ENCODE measurements at regions of chr14 and their contacts with region 1.

Region 1: GRCh38 chr14:20343092-20343861 is at the start of gene PARP2:
- DNase-seq: peak; percentile 98 to 99
- ATAC-seq: peak; percentile 99
- H3K4me3 ChIP-seq: peak within 1 kb of the TSS; percentile 92 to 96
- H3K27ac ChIP-seq: peak within 1 kb of the TSS; percentile 80 to 94
- H3K4me1 ChIP-seq: no peaks in the 10 kb centered on the region
- H3K27me3 ChIP-seq: no peaks in the 10 kb centered on the region
- total RNA-seq, gene PARP2: 13.4 to 19.5 TPM

Region 2: GRCh38 chr14:19947413-19948090 is 395.7 kb before region 1 on chr14:
- intact Hi-C with region 1: no loop called
- DNase-seq: no peak
- ATAC-seq: no peak
- H3K4me3 ChIP-seq: no peak overlapping the region
- H3K27ac ChIP-seq: no peak overlapping the region
- H3K4me1 ChIP-seq: no peaks in the 10 kb centered on the region
- H3K27me3 ChIP-seq: no peaks in the 10 kb centered on the region

Region 3: DNA sequence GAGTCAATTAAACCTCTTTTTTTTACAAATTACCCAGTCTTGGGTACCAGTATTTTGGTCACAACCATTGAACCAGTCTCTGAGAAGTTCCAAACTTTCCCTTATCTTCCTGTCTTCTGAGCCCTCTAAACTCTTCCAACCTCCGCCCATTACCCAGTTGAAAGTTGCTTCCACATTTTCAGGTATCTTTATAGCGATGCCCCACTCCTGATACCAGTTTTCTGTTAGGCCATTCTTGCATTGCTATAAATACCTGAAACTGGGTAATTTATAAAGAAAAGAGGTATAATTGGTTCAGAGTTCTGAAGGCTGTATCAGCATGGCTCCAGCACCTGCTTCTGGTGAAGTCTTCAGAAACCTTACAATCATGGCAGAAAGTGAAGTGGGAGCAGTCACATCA is 69.2 kb before region 1 on chr14:
- intact Hi-C with region 1: no loop called
- DNase-seq: no peak
- ATAC-seq: no peak
- H3K4me3 ChIP-seq: no peak overlapping the region
- H3K27ac ChIP-seq: no peak overlapping the region
- H3K4me1 ChIP-seq: no peaks in the 10 kb centered on the region
- H3K27me3 ChIP-seq: no peaks in the 10 kb centered on the region

Region 4: DNA sequence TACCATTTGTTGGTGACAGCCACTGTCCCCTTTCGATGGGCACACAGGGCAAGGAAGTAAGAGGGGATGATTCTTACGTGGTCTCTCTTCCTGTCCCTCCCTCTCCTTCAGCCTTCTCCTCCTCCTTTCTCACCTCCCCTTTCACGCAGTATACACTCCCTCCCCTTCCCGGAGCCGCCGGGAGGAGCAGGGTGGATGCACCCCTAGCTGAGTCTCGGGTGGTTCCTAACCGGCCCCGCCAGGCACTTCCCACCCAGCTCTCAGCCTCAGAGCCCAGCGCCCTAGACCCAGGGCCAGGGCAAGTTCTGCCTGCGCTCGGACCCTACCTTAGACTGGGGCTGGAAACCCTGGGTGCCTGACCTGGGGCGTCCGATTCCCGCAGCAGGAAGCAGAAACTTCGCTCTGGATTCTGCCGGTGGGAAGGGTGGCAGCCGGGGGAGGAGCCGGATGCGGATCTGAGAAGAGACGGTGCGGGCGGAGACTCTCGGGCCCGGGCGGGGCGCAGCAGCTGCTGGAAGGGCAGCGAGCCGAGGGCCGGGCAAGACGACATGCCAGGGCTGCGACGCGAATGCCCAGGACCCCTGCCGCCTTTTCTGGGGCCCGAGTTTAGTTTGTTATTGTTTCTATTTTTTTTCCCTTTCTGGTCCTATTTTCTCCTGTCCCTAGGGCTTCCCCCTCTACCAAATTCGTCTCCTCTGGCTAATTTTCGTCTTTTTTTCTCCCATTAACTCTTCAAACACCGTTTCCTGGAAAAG is 69.9 kb after region 1 on chr14 and contains the start of gene TEP1:
- intact Hi-C with region 1: loop called (anchors 5 kb)
- DNase-seq: peak; percentile 94 to 96
- ATAC-seq: peak; percentile 96
- H3K4me3 ChIP-seq: peak within 1 kb of the TSS; percentile 87 to 96
- H3K27ac ChIP-seq: peak within 1 kb of the TSS; percentile 84 to 99
- H3K4me1 ChIP-seq: peaks cover 3 to 7% of the 10 kb centered on the region in 2 donors
- H3K27me3 ChIP-seq: no peaks in the 10 kb centered on the region
- total RNA-seq, gene TEP1: 49.0 to 62.4 TPM

Region 5: GRCh38 chr14:20461274-20462001 is 118.2 kb after region 1 on chr14 and contains the start of gene PIP4P1:
- intact Hi-C with region 1: loop called in 1 of 2 experiments (anchors 10 kb)
- DNase-seq: peak; percentile 99
- ATAC-seq: peak; percentile 99
- H3K4me3 ChIP-seq: peak within 1 kb of the TSS; percentile 77 to 83
- H3K27ac ChIP-seq: peak within 1 kb of the TSS in 1 of 2 donors; percentile 50
- H3K4me1 ChIP-seq: no peaks in the 10 kb centered on the region
- H3K27me3 ChIP-seq: no peaks in the 10 kb centered on the region
- total RNA-seq, gene PIP4P1: 25.9 to 27.6 TPM